A673 (cell line): ENCODE measurements at regions of chr15 and their contacts with region 1.

Region 1: DNA sequence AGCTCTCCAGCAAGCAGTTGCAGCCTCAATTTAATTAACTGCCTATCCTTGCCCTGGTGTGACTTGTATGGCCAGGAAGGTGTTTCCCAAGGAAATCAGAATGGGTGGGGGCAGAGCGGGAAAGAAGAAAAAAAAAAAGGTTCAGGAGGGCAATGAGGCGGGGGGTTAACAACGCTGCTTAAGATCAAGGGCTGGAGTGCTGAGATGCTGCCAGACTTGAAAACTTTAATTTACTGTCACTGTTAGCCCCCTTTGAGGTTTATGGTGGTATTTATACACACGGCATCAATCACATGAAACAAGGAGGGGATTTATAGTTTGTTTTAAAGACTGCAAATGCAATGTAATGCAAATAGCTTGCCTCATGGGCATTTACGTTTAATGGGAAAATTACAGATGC is 319.4 kb upstream of the NR2F2 start:
- DNase-seq: no peak
- H3K4me3 ChIP-seq: no peak overlapping the region
- H3K27ac ChIP-seq: no peak overlapping the region
- H3K4me1 ChIP-seq: no peaks in the 10 kb centered on the region
- H3K27me3 ChIP-seq: no peaks in the 10 kb centered on the region
- CTCF ChIP-seq: no peak

Region 2: GRCh38 chr15:96619174-96619573 is 608.0 kb after region 1 on chr15:
- CTCF ChIA-PET with region 1: no interaction called
- POLR2A ChIA-PET with region 1: interaction called, 13 read pairs
- intact Hi-C with region 1: no loop called
- DNase-seq: peak; percentile 61
- H3K4me3 ChIP-seq: peak overlapping the region; percentile 2
- H3K27ac ChIP-seq: no peak overlapping the region
- H3K4me1 ChIP-seq: peaks cover 18% of the 10 kb centered on the region
- H3K27me3 ChIP-seq: no peaks in the 10 kb centered on the region
- CTCF ChIP-seq: no peak